ENCODE measurements at regions of chr6 and their contacts with region 1.

Region 1: DNA sequence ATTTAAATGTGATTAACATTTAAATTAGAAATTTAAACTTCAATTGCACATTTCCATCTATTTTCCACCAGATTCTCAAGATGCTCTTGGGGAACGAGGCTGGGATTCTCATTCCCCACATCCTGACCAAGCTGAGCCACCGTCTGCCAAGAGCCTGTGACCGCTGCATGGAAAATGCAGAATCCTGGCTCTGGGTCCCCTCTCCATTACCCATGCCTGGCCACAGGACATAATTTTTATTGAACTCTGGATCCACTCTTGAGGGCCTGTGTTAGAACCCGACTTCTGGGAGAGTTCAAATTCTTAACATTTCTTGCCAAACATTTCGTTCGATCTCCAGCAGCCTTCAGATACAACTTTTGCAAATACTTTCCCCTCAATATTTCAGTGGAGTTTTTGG is 201.6 kb upstream of the SNX9 start:
- DNase-seq: no peak
- ATAC-seq: no peak
- H3K4me3 ChIP-seq: no peak overlapping the region
- H3K27ac ChIP-seq: no peak overlapping the region
- H3K4me1 ChIP-seq: no peaks in the 10 kb centered on the region
- H3K27me3 ChIP-seq: no peaks in the 10 kb centered on the region
- CTCF ChIP-seq: no peak

Region 2: GRCh38 chr6:157036232-157036711 is 585.1 kb before region 1 on chr6:
- CTCF ChIA-PET with region 1: no interaction called
- POLR2A ChIA-PET with region 1: no interaction called
- in situ Hi-C with region 1: no loop called
- intact Hi-C with region 1: no loop called
- DNase-seq: no peak
- ATAC-seq: no peak
- H3K4me3 ChIP-seq: no peak overlapping the region
- H3K27ac ChIP-seq: 0 out of 2 replicates have a peak overlapping the region, but pooled peaks have one; percentile 11
- H3K4me1 ChIP-seq: peaks cover 16% of the 10 kb centered on the region; the same call in 1 of the 2 replicates
- H3K27me3 ChIP-seq: no peaks in the 10 kb centered on the region
- CTCF ChIP-seq: no peak

Region 3: GRCh38 chr6:157554747-157555146 is 66.7 kb before region 1 on chr6:
- CTCF ChIA-PET with region 1: no interaction called
- POLR2A ChIA-PET with region 1: interaction called, 15 read pairs
- in situ Hi-C with region 1: no loop called
- intact Hi-C with region 1: no loop called
- DNase-seq: no peak
- ATAC-seq: no peak
- H3K4me3 ChIP-seq: no peak overlapping the region
- H3K27ac ChIP-seq: no peak overlapping the region
- H3K4me1 ChIP-seq: peaks cover 4% of the 10 kb centered on the region; the same call in 1 of the 2 replicates
- H3K27me3 ChIP-seq: no peaks in the 10 kb centered on the region
- CTCF ChIP-seq: no peak

Region 4: DNA sequence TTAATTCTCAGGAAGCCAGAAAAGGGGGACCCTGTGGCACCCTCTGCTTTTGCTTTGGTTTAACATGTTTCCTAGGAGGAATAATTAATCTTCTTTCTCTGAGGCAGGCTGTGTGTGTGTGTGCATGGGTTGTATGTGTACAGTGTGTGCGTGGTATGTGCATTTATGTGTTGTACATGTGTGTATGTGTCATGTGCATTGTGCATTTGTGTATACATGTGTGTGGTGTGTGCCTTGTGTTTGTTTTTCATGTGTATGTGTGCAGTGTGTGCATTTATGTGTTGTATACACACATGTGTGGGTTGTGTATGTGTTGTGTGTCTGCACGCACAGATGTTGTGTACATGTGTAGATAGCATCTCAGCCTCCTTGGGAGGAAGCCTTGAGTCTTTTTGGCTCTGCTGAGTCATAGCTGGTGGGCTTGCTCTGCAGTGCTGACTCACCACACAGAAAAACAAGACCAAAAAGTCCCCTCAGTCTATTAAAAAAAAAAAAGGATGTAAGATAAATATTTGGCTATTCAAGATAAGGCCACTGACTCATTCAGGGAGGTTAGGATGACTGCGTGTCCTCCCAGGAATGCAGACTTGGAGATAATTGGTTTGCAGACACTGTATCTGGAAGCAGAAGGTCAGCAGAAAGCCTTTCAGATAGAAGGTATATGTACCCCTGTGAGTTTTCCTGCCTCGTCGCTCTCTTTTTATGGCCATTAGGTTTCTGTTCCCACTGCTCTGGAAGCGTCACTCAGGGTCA is 418.8 kb after region 1 on chr6:
- CTCF ChIA-PET with region 1: no interaction called
- POLR2A ChIA-PET with region 1: no interaction called
- in situ Hi-C with region 1: no loop called
- intact Hi-C with region 1: no loop called
- DNase-seq: peak; percentile 82
- ATAC-seq: peak; percentile 75
- H3K4me3 ChIP-seq: no peak overlapping the region
- H3K27ac ChIP-seq: peak overlapping the region; percentile 91
- H3K4me1 ChIP-seq: peaks cover 79% of the 10 kb centered on the region
- H3K27me3 ChIP-seq: no peaks in the 10 kb centered on the region
- CTCF ChIP-seq: no peak